ENCODE measurements at regions of chr2 and their contacts with region 1.

Region 1: DNA sequence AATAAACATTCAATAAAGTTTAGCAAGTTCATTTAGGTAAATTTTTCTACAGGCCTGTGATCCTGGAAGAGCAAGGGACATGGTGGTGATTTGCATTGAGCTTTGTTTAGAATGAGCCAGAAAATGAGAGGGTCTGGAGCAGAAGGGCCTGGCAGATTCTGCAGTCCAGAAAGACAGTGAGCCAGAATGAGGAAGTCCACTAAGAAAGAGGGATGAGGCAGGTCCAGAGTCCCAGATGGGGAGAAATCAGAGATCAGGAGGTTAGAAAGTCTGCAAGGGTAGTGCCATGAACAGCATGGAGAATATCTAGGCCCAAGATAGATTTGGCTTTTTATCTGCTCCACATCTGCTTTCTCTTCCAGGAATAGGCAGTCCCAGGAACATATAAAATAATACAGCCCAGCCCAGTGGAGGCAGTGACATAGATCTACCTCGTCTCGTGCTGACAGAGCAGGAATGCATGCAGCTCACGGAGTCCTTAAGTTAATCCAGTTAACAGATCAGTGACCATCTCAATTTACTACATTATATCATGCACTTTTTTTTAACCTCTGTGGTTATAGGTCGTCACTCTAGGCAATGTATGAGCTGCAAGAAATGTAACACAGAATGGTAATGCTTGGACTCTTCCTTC is 429.1 kb downstream of the SUCLG1 start:
- DNase-seq: no peak
- H3K4me3 ChIP-seq: no peak overlapping the region
- H3K27ac ChIP-seq: no peak overlapping the region
- H3K4me1 ChIP-seq: no peaks in the 10 kb centered on the region
- H3K27me3 ChIP-seq: no peaks in the 10 kb centered on the region
- CTCF ChIP-seq: no peak
- POLR2A ChIP-seq: no peak

Region 2: GRCh38 chr2:84314901-84315330 is 284.9 kb after region 1 on chr2:
- intact Hi-C with region 1: loop called in 1 of 2 experiments (anchors 5 kb)
- DNase-seq: peak; percentile 83 to 95 (median 89)
- H3K4me3 ChIP-seq: no peak overlapping the region
- H3K27ac ChIP-seq: no peak overlapping the region
- H3K4me1 ChIP-seq: no peaks in the 10 kb centered on the region
- H3K27me3 ChIP-seq: no peaks in the 10 kb centered on the region
- CTCF ChIP-seq: peak; percentile 82 to 90 (median 85)
- POLR2A ChIP-seq: no peak